Activated B cell treated with CpG ODN at 0.5 μM for 24 hours (primary cell): ENCODE measurements at regions of chr14 and their contacts with region 1.

Region 1: GRCh38 chr14:28751467-28752058 is 15.0 kb upstream of the FOXG1 start:
- DNase-seq: no peak
- ATAC-seq: peak; percentile 45
- H3K4me3 Mint-ChIP-seq: no peak overlapping the region
- H3K27ac Mint-ChIP-seq: no peak overlapping the region
- H3K4me1 Mint-ChIP-seq: no peaks in the 10 kb centered on the region
- H3K27me3 Mint-ChIP-seq: peaks cover 33% of the 10 kb centered on the region
- CTCF ChIP-seq: no peak

Region 2: DNA sequence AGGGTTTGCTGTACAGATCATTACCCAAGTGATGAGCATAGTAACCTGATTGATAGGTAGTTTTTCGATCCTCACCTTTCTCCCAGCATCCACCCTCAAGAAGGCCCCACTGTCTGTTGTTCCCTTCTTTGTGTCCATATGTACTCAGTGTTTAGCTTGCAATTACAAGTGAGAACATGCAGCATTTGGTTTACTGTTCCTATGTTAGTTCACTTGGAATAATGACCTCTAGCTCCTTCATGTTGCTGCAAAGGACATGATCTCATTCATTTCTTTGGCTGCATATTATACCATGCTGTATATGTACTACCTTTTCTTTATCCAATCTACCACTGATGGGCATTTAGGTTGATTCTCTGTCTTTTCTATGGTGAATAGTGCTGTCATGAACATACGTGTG is 166.6 kb before region 1 on chr14:
- CTCF ChIA-PET with region 1: no interaction called
- POLR2A ChIA-PET with region 1: no interaction called
- intact Hi-C with region 1: no loop called
- DNase-seq: no peak
- ATAC-seq: no peak
- H3K4me3 Mint-ChIP-seq: no peak overlapping the region
- H3K27ac Mint-ChIP-seq: no peak overlapping the region
- H3K4me1 Mint-ChIP-seq: no peaks in the 10 kb centered on the region
- H3K27me3 Mint-ChIP-seq: no peaks in the 10 kb centered on the region
- CTCF ChIP-seq: no peak

Region 3: GRCh38 chr14:29042551-29042950 is 291.0 kb after region 1 on chr14:
- CTCF ChIA-PET with region 1: no interaction called
- POLR2A ChIA-PET with region 1: no interaction called
- intact Hi-C with region 1: no loop called
- DNase-seq: no peak
- ATAC-seq: no peak
- H3K4me3 Mint-ChIP-seq: no peak overlapping the region
- H3K27ac Mint-ChIP-seq: no peak overlapping the region
- H3K4me1 Mint-ChIP-seq: no peaks in the 10 kb centered on the region
- H3K27me3 Mint-ChIP-seq: no peaks in the 10 kb centered on the region
- CTCF ChIP-seq: no peak

Region 4: GRCh38 chr14:29536886-29537511 is 785.4 kb after region 1 on chr14:
- CTCF ChIA-PET with region 1: interaction called, 3 read pairs
- POLR2A ChIA-PET with region 1: no interaction called
- intact Hi-C with region 1: loop called (anchors 1 kb)
- DNase-seq: no peak
- ATAC-seq: no peak
- H3K4me3 Mint-ChIP-seq: no peak overlapping the region
- H3K27ac Mint-ChIP-seq: no peak overlapping the region
- H3K4me1 Mint-ChIP-seq: no peaks in the 10 kb centered on the region
- H3K27me3 Mint-ChIP-seq: no peaks in the 10 kb centered on the region
- CTCF ChIP-seq: no peak

Region 5: GRCh38 chr14:30214461-30215090 is 1463.0 kb after region 1 on chr14:
- CTCF ChIA-PET with region 1: no interaction called
- POLR2A ChIA-PET with region 1: no interaction called
- intact Hi-C with region 1: loop called (anchors 1 kb)
- DNase-seq: no peak
- ATAC-seq: no peak
- H3K4me3 Mint-ChIP-seq: no peak overlapping the region
- H3K27ac Mint-ChIP-seq: no peak overlapping the region
- H3K4me1 Mint-ChIP-seq: no peaks in the 10 kb centered on the region
- H3K27me3 Mint-ChIP-seq: no peaks in the 10 kb centered on the region
- CTCF ChIP-seq: no peak

Region 6: GRCh38 chr14:30330445-30330844 is 1578.9 kb after region 1 on chr14:
- CTCF ChIA-PET with region 1: no interaction called
- POLR2A ChIA-PET with region 1: no interaction called
- intact Hi-C with region 1: loop called (anchors 2 kb)
- DNase-seq: no peak
- ATAC-seq: no peak
- H3K4me3 Mint-ChIP-seq: no peak overlapping the region
- H3K27ac Mint-ChIP-seq: no peak overlapping the region
- H3K4me1 Mint-ChIP-seq: no peaks in the 10 kb centered on the region
- H3K27me3 Mint-ChIP-seq: no peaks in the 10 kb centered on the region
- CTCF ChIP-seq: no peak

Region 7: DNA sequence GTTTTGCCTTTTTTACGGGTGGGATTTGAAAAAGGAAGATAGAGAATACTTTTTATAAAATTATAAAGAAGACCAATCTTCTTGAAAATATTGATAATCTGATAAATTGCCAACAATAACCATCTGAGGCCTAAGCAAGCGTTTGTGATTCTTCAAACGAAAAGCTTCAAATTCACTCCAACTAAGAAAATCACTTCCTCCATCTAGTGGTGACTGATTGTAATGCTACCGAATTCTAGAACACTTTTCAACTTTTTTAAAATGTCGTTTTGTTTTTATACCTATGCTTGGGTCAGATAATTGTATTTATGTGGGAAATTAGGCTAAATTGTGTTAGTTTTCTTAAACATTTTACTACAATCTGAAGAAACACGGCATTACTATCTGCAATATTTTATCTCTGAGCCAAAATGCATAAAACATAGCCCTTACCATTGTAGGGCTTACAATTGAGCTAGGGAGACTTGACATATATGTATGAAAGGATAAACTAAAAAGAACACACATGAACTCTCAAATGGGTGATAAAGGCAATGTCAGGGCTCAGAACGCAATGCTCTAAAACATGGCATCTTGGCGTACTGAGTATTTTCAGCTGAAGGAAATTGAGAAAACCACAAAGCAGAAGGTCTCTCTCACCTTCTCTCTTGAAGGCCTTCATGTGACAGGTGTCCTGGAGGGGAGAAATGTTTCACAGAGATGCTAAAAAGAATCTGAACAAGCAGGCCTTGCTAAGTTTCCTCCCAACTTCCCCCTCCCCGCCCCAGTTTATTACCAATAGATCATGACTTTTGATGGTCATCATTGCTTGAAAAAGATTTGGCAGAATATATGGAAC is 1770.6 kb after region 1 on chr14:
- CTCF ChIA-PET with region 1: no interaction called
- POLR2A ChIA-PET with region 1: no interaction called
- intact Hi-C with region 1: loop called (anchors 5 kb)
- DNase-seq: no peak
- ATAC-seq: no peak
- H3K4me3 Mint-ChIP-seq: no peak overlapping the region
- H3K27ac Mint-ChIP-seq: no peak overlapping the region
- H3K4me1 Mint-ChIP-seq: peaks cover 4% of the 10 kb centered on the region
- H3K27me3 Mint-ChIP-seq: peaks cover 2% of the 10 kb centered on the region
- CTCF ChIP-seq: peak; percentile 83